ENCODE measurements at regions of chr19 and their contacts with region 1.

Region 1: DNA sequence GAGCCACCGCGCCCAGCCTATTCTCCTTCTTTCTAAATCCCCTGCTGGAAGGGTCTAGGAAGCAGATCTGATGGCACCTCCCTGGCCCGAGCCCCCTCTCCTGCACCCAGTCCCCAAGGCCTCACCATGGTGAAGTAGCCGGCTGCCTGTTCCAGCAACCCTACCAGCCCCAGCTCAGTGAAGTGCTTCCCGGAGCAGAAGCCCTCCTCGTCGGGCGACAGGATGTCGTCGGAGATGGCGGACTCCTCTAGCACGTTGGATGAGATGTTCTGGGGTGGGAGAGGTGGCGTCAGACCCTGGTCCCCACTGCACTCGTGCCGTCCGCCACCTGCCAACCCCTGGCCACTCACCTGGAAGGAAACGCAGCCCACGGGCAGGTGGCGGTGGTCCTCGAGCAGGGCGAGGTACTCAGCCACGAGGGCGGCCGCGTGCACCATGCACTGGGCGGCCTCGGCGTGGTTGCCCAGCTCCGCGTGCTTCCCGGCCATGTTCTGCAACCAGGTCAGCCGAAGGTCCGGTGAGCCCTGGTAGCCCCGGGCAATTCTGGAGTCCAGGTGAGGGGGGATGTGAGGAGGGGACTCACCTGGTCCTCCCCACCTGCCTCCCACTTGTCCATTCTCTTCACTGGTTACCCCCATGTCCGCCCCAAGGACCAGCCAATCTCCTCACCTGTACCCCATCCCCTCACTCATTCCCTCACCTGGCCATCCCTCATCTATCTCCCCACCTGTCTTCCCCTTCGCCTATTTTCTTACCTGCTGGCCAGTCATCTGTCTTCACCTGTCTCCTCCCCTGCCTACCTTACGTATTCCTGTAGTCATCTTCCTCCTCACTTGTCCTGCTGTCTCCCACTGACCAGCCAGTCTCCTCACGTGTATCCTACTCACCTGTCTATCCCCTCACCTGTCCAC is 11.5 kb upstream of the KANK2 start:
- DNase-seq: no peak
- H3K4me3 ChIP-seq: no peak overlapping the region
- H3K27ac ChIP-seq: no peak overlapping the region
- H3K4me1 ChIP-seq: peaks cover 0 to 17% (median 16%) of the 10 kb centered on the region in 4 donors
- H3K27me3 ChIP-seq: no peaks in the 10 kb centered on the region
- CTCF ChIP-seq: no peak

Region 2: DNA sequence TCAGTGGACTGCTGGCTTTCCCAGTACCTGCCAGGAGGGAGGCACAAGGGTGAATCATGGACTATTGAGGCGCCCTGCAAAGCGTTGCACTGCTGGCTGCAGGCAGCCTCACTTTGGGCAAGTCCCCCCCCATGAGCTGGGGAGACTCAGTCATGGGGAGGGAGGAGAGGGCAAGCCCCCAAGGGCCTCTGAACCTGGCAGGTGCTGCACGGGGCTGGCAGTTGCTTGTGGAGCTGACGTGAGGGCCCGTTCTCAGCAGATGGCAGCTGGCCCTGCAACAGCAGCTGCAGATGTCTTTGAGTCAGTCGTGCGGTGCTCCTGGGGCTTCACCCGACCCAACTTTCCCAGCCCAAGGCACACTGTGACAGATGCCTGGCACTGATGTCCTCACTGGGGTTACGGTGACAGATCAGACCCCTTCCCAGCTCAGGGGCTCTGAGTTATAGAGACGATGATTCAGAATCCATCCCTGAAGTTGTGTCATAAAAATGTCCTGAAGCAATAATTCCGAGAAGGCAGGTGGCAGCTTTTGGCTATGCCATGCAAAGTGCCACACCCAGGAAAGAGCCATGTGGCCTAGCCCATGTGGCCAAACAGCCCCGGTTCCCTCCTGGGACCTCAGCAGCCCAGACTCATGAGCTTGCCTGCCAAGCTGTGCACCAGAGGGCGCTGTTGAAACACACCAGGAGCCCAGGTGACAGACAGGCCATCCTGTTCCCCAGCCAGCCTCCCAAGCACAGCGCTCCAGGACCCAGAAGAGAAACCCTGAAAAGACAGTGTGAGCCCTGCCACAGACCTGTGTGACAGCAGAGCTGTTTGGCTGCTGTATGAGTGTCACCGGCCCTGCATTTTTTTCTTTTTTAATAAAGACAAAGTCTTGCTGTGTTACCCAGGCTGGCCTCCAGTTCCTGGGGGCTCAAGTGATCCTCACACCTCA is 173.1 kb before region 1 on chr19:
- intact Hi-C with region 1: loop called (anchors 2 kb)
- DNase-seq: peak; percentile 94 to 96
- H3K4me3 ChIP-seq: no peak overlapping the region
- H3K27ac ChIP-seq: peak overlapping the region; percentile 44 to 66
- H3K4me1 ChIP-seq: peaks cover 0 to 17% (median 12%) of the 10 kb centered on the region in 4 donors
- H3K27me3 ChIP-seq: no peaks in the 10 kb centered on the region
- CTCF ChIP-seq: peak; percentile 83 to 93

Region 3: GRCh38 chr19:11197264-11198174 is 11.3 kb before region 1 on chr19 and contains the start of gene KANK2:
- intact Hi-C with region 1: no loop called
- DNase-seq: peak; percentile 73 to 92
- H3K4me3 ChIP-seq: peak within 1 kb of the TSS; percentile 93 to 98
- H3K27ac ChIP-seq: peak within 1 kb of the TSS; percentile 94 to 98
- H3K4me1 ChIP-seq: peaks cover 0 to 71% (median 51%) of the 10 kb centered on the region in 4 donors
- H3K27me3 ChIP-seq: no peaks in the 10 kb centered on the region
- CTCF ChIP-seq: peak in 1 of 2 experiments; percentile 9

Measured in tibial artery (tissue), 4 donors.